ENCODE measurements at regions of chr15 and their contacts with region 1.

Region 1: DNA sequence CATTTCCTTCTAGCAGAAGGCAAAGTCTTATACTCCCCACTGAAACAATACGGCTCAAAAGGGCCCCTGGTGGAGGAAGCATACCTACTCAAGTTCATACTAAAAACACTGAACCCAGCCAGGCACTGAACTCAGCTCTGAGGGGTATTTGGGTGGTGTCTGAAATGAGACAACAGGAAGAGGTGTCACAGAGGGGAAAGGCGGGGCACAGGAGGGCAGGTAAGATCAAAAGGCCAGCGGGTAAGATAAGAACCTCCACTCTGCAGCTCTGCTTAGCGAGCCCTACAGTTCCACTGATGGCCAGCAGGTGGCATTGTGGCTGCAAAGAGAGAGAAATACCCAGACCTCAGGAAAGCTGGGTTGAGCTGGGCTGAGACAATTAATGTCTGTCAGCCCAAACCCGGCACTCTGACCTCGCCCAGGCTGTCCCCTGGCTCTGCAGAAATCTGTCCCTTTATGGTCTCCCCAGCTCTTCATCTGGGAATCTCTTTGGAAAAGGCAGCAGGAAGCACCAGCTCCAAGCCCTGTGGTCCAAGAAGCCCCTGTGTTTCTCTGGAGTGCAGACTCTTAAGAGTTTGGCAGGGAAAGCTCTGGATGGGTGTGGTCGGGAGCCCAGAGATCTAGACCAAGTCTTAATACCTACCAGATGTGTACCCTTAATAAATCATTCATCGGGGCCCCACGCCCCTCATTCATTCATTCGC is 8.4 kb downstream of the MFGE8 start:
- DNase-seq: peak; percentile 95
- ATAC-seq: peak; percentile 99
- H3K4me3 Mint-ChIP-seq: no peak overlapping the region
- H3K27ac Mint-ChIP-seq: peak overlapping the region; percentile 78
- H3K4me1 Mint-ChIP-seq: peaks cover 34% of the 10 kb centered on the region
- H3K27me3 Mint-ChIP-seq: no peaks in the 10 kb centered on the region

Region 2: DNA sequence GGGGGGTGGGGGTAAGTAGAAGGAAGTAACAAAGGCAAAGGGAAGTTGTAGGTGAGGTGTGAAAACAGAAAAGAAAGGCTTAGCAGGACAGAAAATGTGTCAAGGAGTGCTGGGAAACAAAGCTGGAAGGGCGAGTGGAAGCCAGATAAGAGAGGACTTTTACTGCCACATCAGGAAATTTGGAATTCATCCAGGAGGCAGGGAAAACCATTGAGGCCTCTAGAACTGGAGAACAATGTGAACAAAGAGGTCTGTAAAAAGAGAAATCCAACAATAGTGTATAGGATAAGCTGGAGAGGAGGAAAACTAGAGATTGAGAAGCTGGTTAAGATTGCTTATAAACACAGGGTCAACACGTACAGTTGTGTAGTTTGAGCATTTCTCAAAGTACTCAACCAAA is 764.8 kb before region 1 on chr15:
- CTCF ChIA-PET with region 1: no interaction called
- POLR2A ChIA-PET with region 1: no interaction called
- intact Hi-C with region 1: no loop called
- DNase-seq: no peak
- ATAC-seq: no peak
- H3K4me3 Mint-ChIP-seq: no peak overlapping the region
- H3K27ac Mint-ChIP-seq: no peak overlapping the region
- H3K4me1 Mint-ChIP-seq: no peaks in the 10 kb centered on the region
- H3K27me3 Mint-ChIP-seq: peaks cover 5% of the 10 kb centered on the region

Region 3: DNA sequence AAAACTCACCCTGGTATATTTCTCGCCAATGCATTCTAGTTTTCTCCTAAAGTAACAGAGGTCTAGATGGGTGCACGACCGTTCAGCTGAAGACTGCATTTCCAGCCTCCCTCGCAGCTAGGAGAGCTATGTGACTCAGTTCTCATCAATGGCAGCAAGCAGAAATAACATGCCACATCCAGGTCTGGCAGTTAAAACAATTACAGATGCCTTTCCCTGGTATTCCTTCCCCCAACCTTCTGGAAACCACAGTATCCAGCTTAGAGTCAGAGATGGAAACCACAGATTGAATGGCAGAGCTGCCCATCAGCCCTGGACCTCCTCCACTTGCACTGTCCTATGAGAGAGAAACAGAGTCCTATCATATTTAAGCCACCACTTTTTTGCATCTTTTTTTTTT is 14.3 kb before region 1 on chr15:
- CTCF ChIA-PET with region 1: interaction called, 25 read pairs
- POLR2A ChIA-PET with region 1: interaction called, 5 read pairs
- intact Hi-C with region 1: loop called in 1 of 2 experiments (anchors 1 kb)
- DNase-seq: no peak
- ATAC-seq: no peak
- H3K4me3 Mint-ChIP-seq: no peak overlapping the region
- H3K27ac Mint-ChIP-seq: no peak overlapping the region
- H3K4me1 Mint-ChIP-seq: peaks cover 14% of the 10 kb centered on the region
- H3K27me3 Mint-ChIP-seq: no peaks in the 10 kb centered on the region

Region 4: GRCh38 chr15:88918738-88919137 is 14.0 kb after region 1 on chr15:
- CTCF ChIA-PET with region 1: interaction called, 14 read pairs
- POLR2A ChIA-PET with region 1: no interaction called
- intact Hi-C with region 1: no loop called
- DNase-seq: peak; percentile 66
- ATAC-seq: peak; percentile 84
- H3K4me3 Mint-ChIP-seq: no peak overlapping the region
- H3K27ac Mint-ChIP-seq: no peak overlapping the region
- H3K4me1 Mint-ChIP-seq: peaks cover 20% of the 10 kb centered on the region
- H3K27me3 Mint-ChIP-seq: peaks cover 4% of the 10 kb centered on the region

Region 5: GRCh38 chr15:89017370-89018066 is 112.7 kb after region 1 on chr15:
- CTCF ChIA-PET with region 1: interaction called, 73 read pairs
- POLR2A ChIA-PET with region 1: no interaction called
- intact Hi-C with region 1: loop called (anchors 1 kb)
- DNase-seq: peak; percentile 93
- ATAC-seq: peak; percentile 88
- H3K4me3 Mint-ChIP-seq: peak overlapping the region; percentile 47
- H3K27ac Mint-ChIP-seq: peak overlapping the region; percentile 55
- H3K4me1 Mint-ChIP-seq: peaks cover 17% of the 10 kb centered on the region
- H3K27me3 Mint-ChIP-seq: peaks cover 3% of the 10 kb centered on the region

Measured in activated CD4-positive, alpha-beta T cell treated with anti-CD3 and anti-CD28 coated beads for 36 hours (primary cell).